HAP-1 (cell line): ENCODE measurements at regions of chr3 and their contacts with region 1.

Region 1: DNA sequence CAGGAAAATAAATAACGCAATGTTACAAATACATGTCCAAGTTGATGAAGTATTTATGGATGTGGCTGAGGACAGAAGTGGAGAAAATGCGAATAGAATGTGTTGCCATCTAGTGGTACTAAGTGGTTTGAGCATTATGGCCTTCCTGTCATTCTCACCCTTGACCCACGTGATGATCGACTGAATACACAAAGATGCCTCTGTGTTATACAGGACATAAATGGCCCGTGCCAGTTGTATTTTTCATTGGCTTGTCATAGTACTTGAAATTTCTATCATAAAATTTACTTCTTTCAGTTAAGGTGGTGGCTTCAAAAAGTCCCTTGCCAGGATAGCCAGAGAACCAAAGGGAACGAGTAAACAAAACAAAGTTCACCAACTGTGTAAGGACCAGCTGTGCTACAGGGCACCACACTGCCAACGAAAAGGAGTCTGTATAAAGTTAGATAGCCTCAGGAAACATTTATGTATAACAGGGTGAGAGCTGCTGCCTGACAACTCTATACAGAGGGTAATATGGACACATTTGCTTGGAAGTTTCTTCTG is 103.7 kb downstream of the MYH15 start:
- DNase-seq: peak; percentile 55 to 85
- H3K4me3 ChIP-seq: no peak overlapping the region
- H3K4me1 ChIP-seq: peaks cover 9% of the 10 kb centered on the region
- H3K27me3 ChIP-seq: no peaks in the 10 kb centered on the region

Region 2: DNA sequence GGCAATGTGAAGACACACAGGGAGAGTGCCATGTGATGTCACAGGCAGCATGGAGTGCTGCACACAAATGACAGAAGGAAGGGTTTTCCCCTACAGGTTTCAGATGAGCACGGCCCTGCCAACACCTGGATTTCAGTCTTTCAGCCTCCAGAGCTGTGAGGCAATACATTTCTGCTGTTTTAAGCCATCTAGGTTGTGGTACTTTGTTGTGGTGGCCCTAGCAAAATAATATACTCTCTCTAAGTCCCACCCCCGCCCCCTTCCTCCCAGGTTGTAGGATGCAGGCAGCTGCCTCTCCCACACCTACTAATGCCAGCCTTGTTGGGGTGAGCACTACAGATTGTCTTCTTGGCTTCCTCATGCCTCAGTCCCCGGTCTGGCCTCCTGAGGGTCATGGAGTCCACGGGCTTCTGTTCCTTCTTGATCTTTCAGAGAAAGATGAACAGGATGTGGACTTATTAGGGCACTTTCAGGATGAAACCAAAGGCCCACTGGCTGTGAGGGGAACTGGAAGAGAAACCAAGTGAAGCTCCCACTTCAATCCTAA is 495.9 kb before region 1 on chr3:
- in situ Hi-C with region 1: no loop called
- DNase-seq: no peak
- H3K4me3 ChIP-seq: no peak overlapping the region
- H3K4me1 ChIP-seq: no peaks in the 10 kb centered on the region; the same call in 1 of the 2 replicates
- H3K27me3 ChIP-seq: peaks cover 4% of the 10 kb centered on the region; the same call in 1 of the 2 replicates

Region 3: DNA sequence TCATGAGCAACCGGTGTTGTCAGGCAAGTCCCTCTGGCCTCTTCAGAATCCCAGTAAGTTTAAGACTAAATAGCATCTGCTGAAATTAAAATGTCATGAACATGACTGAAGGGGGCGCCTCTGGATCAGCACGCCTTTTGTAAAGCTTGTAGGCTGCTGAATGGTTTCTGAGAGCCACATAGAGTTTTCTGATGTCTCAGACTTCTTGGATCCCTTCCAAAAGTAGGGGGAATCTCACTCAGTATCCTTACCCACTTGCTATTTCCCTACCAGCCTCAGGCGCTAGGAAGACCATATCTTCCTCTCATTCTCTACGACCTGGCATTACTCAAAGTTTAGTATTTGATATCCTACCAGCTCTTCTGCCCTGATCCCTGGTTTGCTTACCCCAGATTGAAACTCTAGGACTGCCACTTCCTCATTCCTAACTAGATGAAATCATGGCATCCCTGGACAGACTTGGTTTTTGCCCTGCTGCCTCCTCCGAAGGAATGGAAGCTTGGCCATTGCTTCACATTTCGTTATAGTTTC is 253.2 kb before region 1 on chr3:
- in situ Hi-C with region 1: loop called (anchors 25 kb)
- DNase-seq: peak; percentile 58 to 74
- H3K4me3 ChIP-seq: no peak overlapping the region
- H3K4me1 ChIP-seq: no peaks in the 10 kb centered on the region
- H3K27me3 ChIP-seq: no peaks in the 10 kb centered on the region

Region 4: DNA sequence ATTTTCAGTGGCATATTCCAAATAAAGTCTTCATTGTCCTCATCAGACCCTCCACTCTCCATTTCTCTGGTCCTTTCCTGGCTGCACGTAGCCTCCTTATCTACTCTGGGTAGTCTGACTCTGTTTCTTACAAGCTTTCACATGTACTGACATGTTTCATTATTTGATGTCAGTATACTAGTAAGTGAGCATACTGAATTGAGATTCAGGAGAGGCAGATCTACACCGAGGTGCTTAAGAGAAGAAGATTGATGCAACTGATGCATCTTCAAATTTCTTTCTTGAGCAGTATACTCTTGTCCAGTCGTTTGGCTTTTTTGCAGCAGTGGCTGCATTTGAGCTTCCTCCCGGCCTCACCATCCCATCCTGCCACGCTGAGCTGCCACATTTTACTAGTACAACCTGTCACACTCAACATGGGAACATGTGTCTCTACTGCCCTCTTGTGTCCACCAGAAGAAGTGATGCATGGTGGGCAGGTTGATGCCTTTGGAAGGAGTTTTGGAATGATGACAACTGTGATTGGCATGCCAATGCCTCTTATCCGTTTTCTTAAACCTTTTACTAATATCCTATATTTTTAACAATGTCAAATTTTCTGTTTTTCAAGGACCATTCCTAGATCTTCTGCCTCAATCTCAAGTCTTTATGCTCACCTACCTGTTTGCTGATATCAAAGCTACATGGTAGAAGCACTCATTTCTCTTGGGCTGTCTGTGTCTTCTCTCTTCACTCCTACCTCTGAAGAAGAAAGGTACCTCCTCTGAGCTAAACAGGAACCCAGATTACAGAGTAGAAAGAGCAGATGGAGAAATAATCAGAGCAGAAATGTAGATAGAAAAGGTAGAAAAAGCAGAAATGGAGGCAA is 508.3 kb after region 1 on chr3:
- in situ Hi-C with region 1: no loop called
- DNase-seq: peak; percentile 69 to 80
- H3K4me3 ChIP-seq: no peak overlapping the region
- H3K4me1 ChIP-seq: no peaks in the 10 kb centered on the region
- H3K27me3 ChIP-seq: peaks cover 2% of the 10 kb centered on the region; the same call in 1 of the 2 replicates